Endothelial cell of umbilical vein (primary cell): ENCODE measurements at regions of chr11 and their contacts with region 1.

Region 1: DNA sequence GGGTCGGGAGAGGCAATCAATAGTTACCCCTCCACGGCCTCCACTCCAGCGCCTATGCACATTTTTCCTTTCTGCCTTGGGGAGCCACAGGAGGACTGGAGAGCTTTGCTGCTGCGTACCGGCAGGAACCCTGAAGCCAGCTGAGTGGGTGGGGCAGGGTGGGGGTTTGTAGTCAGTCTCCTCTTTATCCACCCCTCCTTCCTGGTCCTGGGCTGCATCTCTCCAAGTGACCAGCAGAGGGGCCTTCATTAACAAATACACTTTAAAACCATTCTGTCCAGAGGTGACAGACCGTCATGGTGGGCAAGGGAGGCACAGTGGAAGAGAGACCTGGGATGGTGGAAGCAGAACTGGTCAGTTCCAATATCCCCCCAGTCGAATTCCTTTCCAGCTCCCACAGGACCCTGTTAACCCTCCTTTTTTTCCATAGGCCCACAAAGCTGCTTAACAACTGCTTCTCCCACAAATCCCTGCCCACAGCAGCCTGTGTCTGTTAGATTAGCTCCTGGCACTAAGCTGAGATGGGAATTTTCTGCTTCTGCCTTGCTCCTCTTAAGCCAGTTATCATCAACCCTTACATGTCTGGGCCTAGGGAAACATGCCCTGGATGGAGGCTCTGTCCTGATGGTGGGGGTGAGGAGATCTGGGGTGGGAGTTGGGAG is 3.9 kb upstream of the ABCG4 start:
- DNase-seq: peak; percentile 75
- H3K4me3 ChIP-seq: no peak overlapping the region
- H3K27ac ChIP-seq: no peak overlapping the region
- H3K4me1 ChIP-seq: peaks cover 4% of the 10 kb centered on the region
- H3K27me3 ChIP-seq: peaks cover 2 to 3% of the 10 kb centered on the region in 2 experiments
- CTCF ChIP-seq: peak; percentile 43 to 75
- POLR2A ChIP-seq: no peak

Region 2: GRCh38 chr11:119101759-119102423 is 43.1 kb before region 1 on chr11 and contains the start of gene DPAGT1:
- CTCF ChIA-PET with region 1: interaction called, 5 read pairs
- POLR2A ChIA-PET with region 1: no interaction called
- dilution Hi-C with region 1: no loop called
- intact Hi-C with region 1: loop called (anchors 2 kb)
- DNase-seq: peak; percentile 96
- H3K4me3 ChIP-seq: peak within 1 kb of the TSS; percentile 81 to 97 (median 86)
- H3K27ac ChIP-seq: peak within 1 kb of the TSS; percentile 94
- H3K4me1 ChIP-seq: peaks cover 21% of the 10 kb centered on the region
- H3K27me3 ChIP-seq: no peaks in the 10 kb centered on the region
- CTCF ChIP-seq: no peak
- POLR2A ChIP-seq: no peak
- total RNA-seq, gene DPAGT1: 48.4 and 62.0 TPM in 2 replicates

Region 3: DNA sequence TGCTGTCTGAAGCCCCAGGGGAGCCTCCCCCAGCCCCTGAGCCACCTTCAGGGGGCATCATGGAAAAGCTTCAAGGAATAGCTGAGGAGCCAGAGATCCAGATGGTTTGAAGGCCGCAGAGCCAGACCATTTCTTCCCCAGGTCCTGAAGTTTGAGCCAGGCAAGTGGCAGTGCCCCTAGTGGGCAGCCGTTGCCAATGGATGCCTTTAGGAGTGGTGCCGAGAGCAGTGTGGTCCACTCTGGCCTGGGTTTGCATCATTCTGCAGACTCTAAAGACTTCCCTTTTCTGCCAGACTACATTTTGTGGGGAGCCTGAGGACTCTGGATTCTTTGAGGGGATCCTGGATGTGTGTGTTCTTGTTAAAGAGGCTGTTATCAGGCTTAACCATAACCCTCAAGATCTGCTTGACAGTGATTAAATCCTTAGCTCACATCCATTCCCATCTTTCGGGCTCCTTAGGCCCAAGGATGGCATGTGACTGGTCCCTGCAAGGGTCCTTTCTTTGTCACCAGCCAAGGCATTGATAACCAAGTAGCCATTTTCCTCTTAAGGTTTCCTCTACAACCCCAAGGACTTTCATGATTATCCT is 10.5 kb before region 1 on chr11:
- CTCF ChIA-PET with region 1: interaction called, 12 read pairs
- POLR2A ChIA-PET with region 1: no interaction called
- dilution Hi-C with region 1: no loop called
- intact Hi-C with region 1: no loop called
- DNase-seq: no peak
- H3K4me3 ChIP-seq: no peak overlapping the region
- H3K27ac ChIP-seq: no peak overlapping the region
- H3K4me1 ChIP-seq: peaks cover 7% of the 10 kb centered on the region
- H3K27me3 ChIP-seq: no peaks in the 10 kb centered on the region
- CTCF ChIP-seq: peak; percentile 58 to 77
- POLR2A ChIP-seq: no peak

Region 4: GRCh38 chr11:119155733-119156492 is 11.0 kb after region 1 on chr11:
- CTCF ChIA-PET with region 1: interaction called, 10 read pairs
- POLR2A ChIA-PET with region 1: no interaction called
- dilution Hi-C with region 1: no loop called
- intact Hi-C with region 1: no loop called
- DNase-seq: no peak
- H3K4me3 ChIP-seq: no peak overlapping the region
- H3K27ac ChIP-seq: no peak overlapping the region
- H3K4me1 ChIP-seq: no peaks in the 10 kb centered on the region
- H3K27me3 ChIP-seq: no peaks in the 10 kb centered on the region
- CTCF ChIP-seq: peak; percentile 20 to 29
- POLR2A ChIP-seq: no peak

Region 5: GRCh38 chr11:119168471-119169281 is 23.7 kb after region 1 on chr11 and contains the start of gene NLRX1:
- CTCF ChIA-PET with region 1: interaction called, 9 read pairs
- POLR2A ChIA-PET with region 1: no interaction called
- dilution Hi-C with region 1: no loop called
- intact Hi-C with region 1: loop called (anchors 2 kb)
- DNase-seq: peak; percentile 79
- H3K4me3 ChIP-seq: peak within 1 kb of the TSS; percentile 6 to 48 (median 17)
- H3K27ac ChIP-seq: peak within 1 kb of the TSS; percentile 55
- H3K4me1 ChIP-seq: peaks cover 11% of the 10 kb centered on the region
- H3K27me3 ChIP-seq: no peaks in the 10 kb centered on the region
- CTCF ChIP-seq: peak; percentile 89 to 94
- POLR2A ChIP-seq: peak; percentile 71
- total RNA-seq, gene NLRX1: 14.6 and 15.1 TPM in 2 replicates

Region 6: GRCh38 chr11:119196833-119197483 is 52.0 kb after region 1 on chr11:
- CTCF ChIA-PET with region 1: interaction called, 59 read pairs
- POLR2A ChIA-PET with region 1: no interaction called
- dilution Hi-C with region 1: no loop called
- intact Hi-C with region 1: loop called (anchors 1 kb)
- DNase-seq: peak; percentile 81
- H3K4me3 ChIP-seq: no peak overlapping the region
- H3K27ac ChIP-seq: no peak overlapping the region
- H3K4me1 ChIP-seq: no peaks in the 10 kb centered on the region
- H3K27me3 ChIP-seq: no peaks in the 10 kb centered on the region
- CTCF ChIP-seq: peak; percentile 69 to 70
- POLR2A ChIP-seq: no peak

Region 7: DNA sequence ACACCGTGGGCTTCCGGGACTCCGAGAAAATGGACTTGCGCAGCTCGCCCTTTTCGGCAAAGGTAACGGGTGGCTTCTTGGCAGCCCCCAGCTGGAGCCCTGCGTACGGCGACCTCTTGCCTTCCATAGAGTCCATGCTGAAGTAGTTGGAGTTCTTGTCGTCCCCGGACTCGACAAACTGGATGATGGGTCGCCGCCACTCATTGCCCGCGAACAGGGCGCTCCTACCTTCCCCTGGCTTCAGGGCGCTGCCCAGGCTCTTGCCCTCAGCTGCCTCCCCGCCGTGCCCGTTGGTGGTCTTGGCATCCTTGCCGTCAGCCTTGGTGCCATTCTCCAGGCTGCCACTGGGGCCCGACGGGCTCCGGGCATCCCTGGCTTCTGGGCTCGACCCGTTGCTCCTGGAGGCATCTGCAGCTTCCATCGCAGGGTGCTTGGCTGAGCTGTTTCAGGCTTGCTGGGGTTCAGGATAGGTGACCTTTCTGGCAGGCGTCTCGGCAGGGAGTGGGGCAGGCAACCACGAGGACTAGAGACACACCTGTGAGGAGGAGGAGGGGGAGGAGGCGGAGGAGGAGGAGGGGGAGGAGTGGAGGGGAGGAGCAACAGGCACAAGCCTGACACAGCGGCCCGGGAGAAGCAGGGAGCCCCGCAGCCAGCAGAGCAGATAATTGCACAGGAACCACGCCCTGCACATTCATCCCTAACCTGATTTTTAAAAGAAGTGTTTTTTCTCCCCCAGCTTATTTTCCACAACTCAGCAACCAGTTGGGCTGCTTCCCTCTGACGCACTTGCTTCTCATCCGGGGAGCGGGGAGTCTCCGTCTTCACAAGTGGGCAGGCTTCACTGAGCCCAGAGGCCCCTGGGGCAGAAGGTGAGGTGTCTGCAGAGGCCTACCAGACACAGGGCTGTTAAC is 992.9 kb after region 1 on chr11 and contains the start of gene TRIM29:
- CTCF ChIA-PET with region 1: no interaction called
- POLR2A ChIA-PET with region 1: no interaction called
- dilution Hi-C with region 1: no loop called
- intact Hi-C with region 1: no loop called
- DNase-seq: no peak
- H3K4me3 ChIP-seq: no peak within 1 kb of the TSS
- H3K27ac ChIP-seq: no peak within 1 kb of the TSS
- H3K4me1 ChIP-seq: no peaks in the 10 kb centered on the region
- H3K27me3 ChIP-seq: no peaks in the 10 kb centered on the region
- CTCF ChIP-seq: no peak
- POLR2A ChIP-seq: no peak
- total RNA-seq, gene TRIM29: not detected in 2 replicates